ENCODE measurements at regions of chr5 and their contacts with region 1.

Region 1: GRCh38 chr5:116574367-116575325 is at the start of gene SEMA6A:
- DNase-seq: peak; percentile 81
- ATAC-seq: peak; percentile 68
- H3K4me3 ChIP-seq: peak within 1 kb of the TSS; percentile 85
- H3K27ac ChIP-seq: no peak within 1 kb of the TSS; the same call in 1 of the 2 replicates
- H3K4me1 ChIP-seq: peaks cover 14% of the 10 kb centered on the region
- H3K27me3 ChIP-seq: peaks cover 2 to 20% of the 10 kb centered on the region in 2 experiments
- CTCF ChIP-seq: peak in 1 of 3 experiments; percentile 14; a peak in 1 of 6 replicates
- EP300 ChIP-seq: peak in 1 of 2 experiments; percentile 51; a peak in 1 of 4 replicates
- POLR2A ChIP-seq: peak; percentile 67
- RAD21 ChIP-seq: no peak; the same call in 1 of the 2 replicates
- polyA plus RNA-seq, gene SEMA6A: 0.16 to 0.22 TPM

Region 2: DNA sequence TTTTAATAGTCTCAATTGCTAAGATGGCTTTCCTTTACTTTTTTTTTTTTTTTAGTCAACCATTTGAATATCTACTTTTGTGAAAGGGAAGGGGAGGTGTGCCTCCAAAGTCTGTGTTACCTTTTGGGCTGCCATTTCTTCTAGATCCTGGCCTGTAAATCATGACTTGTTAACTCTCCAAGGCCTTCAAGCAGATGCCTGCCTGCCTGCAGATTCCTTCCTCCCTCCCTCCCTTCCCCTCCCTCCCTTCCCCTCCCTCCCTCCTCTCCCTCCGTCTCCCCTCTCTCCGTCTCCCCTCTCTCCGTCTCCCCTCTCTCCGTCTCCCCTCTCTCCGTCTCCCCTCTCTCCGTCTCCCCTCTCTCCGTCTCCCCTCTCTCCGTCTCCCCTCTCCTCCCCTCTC is 416.7 kb before region 1 on chr5:
- CTCF ChIA-PET with region 1: no interaction called
- POLR2A ChIA-PET with region 1: no interaction called
- RAD21 ChIA-PET with region 1: no interaction called
- SMC1A ChIA-PET with region 1: no interaction called
- in situ Hi-C with region 1: no loop called
- intact Hi-C with region 1: no loop called
- DNase-seq: no peak
- ATAC-seq: no peak
- H3K4me3 ChIP-seq: no peak overlapping the region
- H3K27ac ChIP-seq: no peak overlapping the region
- H3K4me1 ChIP-seq: no peaks in the 10 kb centered on the region
- H3K27me3 ChIP-seq: no peaks in the 10 kb centered on the region
- CTCF ChIP-seq: no peak
- EP300 ChIP-seq: no peak
- POLR2A ChIP-seq: no peak
- RAD21 ChIP-seq: no peak

Region 3: DNA sequence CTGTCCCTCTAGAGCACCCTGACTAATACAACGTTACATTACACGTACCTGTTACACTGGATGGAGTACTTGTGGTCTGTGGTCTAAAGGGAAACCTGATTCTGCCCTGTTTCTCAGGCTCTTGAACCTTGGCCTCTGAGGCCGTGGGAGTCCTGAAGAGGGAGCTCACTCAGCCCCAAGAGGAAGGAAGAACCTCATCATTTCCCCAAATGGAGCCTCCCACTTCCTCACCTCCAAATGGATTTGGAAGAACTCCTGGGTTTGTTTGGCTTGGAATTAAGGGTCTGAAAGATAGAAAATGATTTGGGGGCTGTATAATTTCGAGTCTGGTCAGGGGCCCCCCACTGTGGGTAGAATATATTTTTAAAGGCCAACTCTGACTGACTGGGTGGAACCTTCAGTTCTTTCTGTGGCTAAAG is 200.2 kb before region 1 on chr5:
- CTCF ChIA-PET with region 1: interaction called, 6 read pairs
- POLR2A ChIA-PET with region 1: interaction called, 3 read pairs
- RAD21 ChIA-PET with region 1: interaction called, 11 read pairs
- SMC1A ChIA-PET with region 1: interaction called, 8 read pairs
- in situ Hi-C with region 1: no loop called
- intact Hi-C with region 1: loop called (anchors 5 kb)
- DNase-seq: peak; percentile 64
- ATAC-seq: peak; percentile 82
- H3K4me3 ChIP-seq: no peak overlapping the region
- H3K27ac ChIP-seq: no peak overlapping the region
- H3K4me1 ChIP-seq: peaks cover 7% of the 10 kb centered on the region
- H3K27me3 ChIP-seq: no peaks in the 10 kb centered on the region
- CTCF ChIP-seq: no peak
- EP300 ChIP-seq: 0 out of 4 replicates have a peak, but pooled peaks of 1 of the 2 experiments have one; percentile 22
- POLR2A ChIP-seq: no peak
- RAD21 ChIP-seq: no peak

Region 4: DNA sequence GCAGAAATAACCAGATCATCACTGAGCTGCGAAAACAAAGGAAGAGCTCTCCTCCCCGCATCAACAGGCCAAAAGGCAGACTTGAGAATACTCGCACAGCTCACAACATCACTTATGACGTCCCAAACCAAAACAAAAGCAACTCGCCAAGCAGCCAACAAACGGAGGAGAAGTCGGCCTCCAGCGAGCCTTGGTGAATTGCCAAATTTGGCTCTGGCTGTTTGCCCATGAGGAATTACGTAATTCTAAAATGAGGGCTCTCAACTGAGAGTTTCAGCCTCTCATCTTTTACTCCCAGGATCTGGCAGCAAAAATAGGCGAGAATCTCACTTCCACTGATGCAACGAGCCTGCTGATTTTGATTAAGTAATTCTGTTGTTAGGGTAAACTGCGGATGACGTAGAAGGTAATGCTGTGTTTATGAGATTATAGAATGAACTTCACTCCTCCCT is 51.7 kb after region 1 on chr5:
- CTCF ChIA-PET with region 1: interaction called, 5 read pairs
- POLR2A ChIA-PET with region 1: interaction called, 10 read pairs
- RAD21 ChIA-PET with region 1: interaction called, 35 read pairs
- SMC1A ChIA-PET with region 1: interaction called, 35 read pairs
- in situ Hi-C with region 1: no loop called
- intact Hi-C with region 1: loop called (anchors 5 kb)
- DNase-seq: no peak
- ATAC-seq: no peak
- H3K4me3 ChIP-seq: no peak overlapping the region
- H3K27ac ChIP-seq: no peak overlapping the region
- H3K4me1 ChIP-seq: peaks cover 6% of the 10 kb centered on the region
- H3K27me3 ChIP-seq: no peaks in the 10 kb centered on the region
- CTCF ChIP-seq: no peak
- EP300 ChIP-seq: no peak
- POLR2A ChIP-seq: no peak
- RAD21 ChIP-seq: no peak

Region 5: GRCh38 chr5:116652196-116652729 is 77.6 kb after region 1 on chr5:
- CTCF ChIA-PET with region 1: interaction called, 42 read pairs
- POLR2A ChIA-PET with region 1: interaction called, 29 read pairs
- RAD21 ChIA-PET with region 1: interaction called, 112 read pairs
- SMC1A ChIA-PET with region 1: interaction called, 125 read pairs
- in situ Hi-C with region 1: loop called (anchors 5 kb)
- intact Hi-C with region 1: loop called (anchors 1 kb)
- DNase-seq: peak; percentile 85
- ATAC-seq: peak; percentile 96
- H3K4me3 ChIP-seq: no peak overlapping the region
- H3K27ac ChIP-seq: no peak overlapping the region; the same call in 1 of the 2 replicates
- H3K4me1 ChIP-seq: peaks cover 12% of the 10 kb centered on the region
- H3K27me3 ChIP-seq: no peaks in the 10 kb centered on the region
- CTCF ChIP-seq: no peak
- EP300 ChIP-seq: peak; percentile 81 to 90; a peak in 3 of 4 replicates
- POLR2A ChIP-seq: no peak
- RAD21 ChIP-seq: no peak

Region 6: DNA sequence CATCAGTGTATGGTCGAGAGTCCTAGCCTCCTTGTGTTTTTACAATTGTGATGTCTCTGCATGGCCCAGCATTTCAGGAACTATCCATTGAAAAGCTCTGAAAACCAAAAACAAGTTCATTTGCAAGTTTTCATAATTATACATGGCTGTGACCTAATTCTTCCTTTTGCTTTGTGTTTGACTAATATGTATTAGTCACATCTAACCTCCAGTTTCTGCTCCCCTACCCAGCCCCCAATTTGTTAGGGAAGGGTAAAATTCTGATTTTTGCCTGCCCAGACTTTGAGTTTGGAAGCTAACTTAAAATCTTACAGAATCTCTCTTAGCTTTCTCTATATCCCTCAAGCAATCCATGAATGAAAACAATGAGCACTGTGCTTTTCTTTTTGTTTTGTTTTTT is 128.1 kb after region 1 on chr5:
- CTCF ChIA-PET with region 1: interaction called, 20 read pairs
- POLR2A ChIA-PET with region 1: interaction called, 4 read pairs
- RAD21 ChIA-PET with region 1: interaction called, 51 read pairs
- SMC1A ChIA-PET with region 1: interaction called, 81 read pairs
- in situ Hi-C with region 1: no loop called
- intact Hi-C with region 1: loop called (anchors 1 kb)
- DNase-seq: no peak
- ATAC-seq: peak; percentile 72
- H3K4me3 ChIP-seq: no peak overlapping the region
- H3K27ac ChIP-seq: peak overlapping the region; percentile 31
- H3K4me1 ChIP-seq: peaks cover 26% of the 10 kb centered on the region
- H3K27me3 ChIP-seq: no peaks in the 10 kb centered on the region
- CTCF ChIP-seq: no peak
- EP300 ChIP-seq: peak in 1 of 2 experiments; percentile 66; a peak in 1 of 4 replicates
- POLR2A ChIP-seq: no peak
- RAD21 ChIP-seq: no peak

Region 7: DNA sequence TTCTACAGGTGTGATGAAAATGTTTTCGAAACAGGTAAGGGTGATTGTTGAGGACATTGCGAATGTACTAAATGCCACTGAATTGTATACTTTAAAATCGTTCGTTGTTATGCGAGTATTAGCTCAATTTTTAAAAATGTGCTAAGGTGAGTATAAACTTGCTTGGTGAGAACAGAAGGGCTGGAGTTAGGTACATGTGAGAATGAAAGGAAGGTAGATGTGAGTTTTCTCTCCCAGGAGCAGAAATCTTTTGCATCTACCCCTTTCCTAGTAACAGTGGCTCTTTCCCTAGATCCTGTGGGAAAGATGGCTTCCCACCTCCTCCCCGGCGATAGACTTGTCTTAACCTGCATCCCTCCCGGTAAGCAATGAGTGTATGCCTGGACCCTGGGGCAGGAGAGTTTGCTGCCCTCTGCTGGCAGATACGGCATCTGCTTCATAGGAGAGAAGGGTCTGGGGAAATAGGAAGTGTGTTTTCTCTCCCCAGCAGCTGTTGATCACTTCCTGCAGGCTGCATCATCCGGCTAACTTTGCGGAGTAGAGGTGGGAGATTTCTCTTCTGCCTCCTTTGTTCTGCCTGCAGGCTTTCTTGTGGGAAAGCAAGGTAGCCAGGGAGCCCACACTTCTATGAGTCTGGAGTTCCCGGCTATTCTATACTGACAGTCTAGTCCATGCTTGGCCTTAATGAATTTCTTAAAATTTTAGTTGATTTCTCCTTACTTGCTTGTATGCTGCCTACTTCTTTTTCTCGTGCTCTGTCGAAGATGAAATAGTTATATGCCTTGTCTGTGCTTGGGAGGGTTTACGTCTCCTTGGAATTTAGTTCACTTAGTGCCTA is 373.3 kb after region 1 on chr5:
- CTCF ChIA-PET with region 1: interaction called, 58 read pairs
- POLR2A ChIA-PET with region 1: interaction called, 5 read pairs
- RAD21 ChIA-PET with region 1: interaction called, 74 read pairs
- SMC1A ChIA-PET with region 1: interaction called, 80 read pairs
- in situ Hi-C with region 1: loop called (anchors 5 kb)
- intact Hi-C with region 1: loop called (anchors 1 kb)
- DNase-seq: peak; percentile 87
- ATAC-seq: peak; percentile 100
- H3K4me3 ChIP-seq: no peak overlapping the region
- H3K27ac ChIP-seq: no peak overlapping the region
- H3K4me1 ChIP-seq: peaks cover 3% of the 10 kb centered on the region
- H3K27me3 ChIP-seq: peaks cover 0 to 1% of the 10 kb centered on the region in 2 experiments; a peak in 1 of 4 replicates
- CTCF ChIP-seq: peak; percentile 88 to 94 (median 92)
- EP300 ChIP-seq: 0 out of 4 replicates have a peak, but pooled peaks of 1 of the 2 experiments have one; percentile 35
- POLR2A ChIP-seq: no peak
- RAD21 ChIP-seq: peak; percentile 98

Measured in GM12878 (cell line).